ENCODE measurements at regions of chr10 and their contacts with region 1.

Region 1: GRCh38 chr10:127300868-127301321 is 104.5 kb upstream of the INSYN2A start:
- DNase-seq: no peak
- H3K4me3 ChIP-seq: no peak overlapping the region
- H3K4me3 Mint-ChIP-seq: no peak overlapping the region
- H3K27ac Mint-ChIP-seq: no peak overlapping the region
- H3K4me1 ChIP-seq: no peaks in the 10 kb centered on the region
- H3K4me1 Mint-ChIP-seq: no peaks in the 10 kb centered on the region
- H3K27me3 ChIP-seq: no peaks in the 10 kb centered on the region
- H3K27me3 Mint-ChIP-seq: no peaks in the 10 kb centered on the region
- CTCF ChIP-seq: no peak

Region 2: DNA sequence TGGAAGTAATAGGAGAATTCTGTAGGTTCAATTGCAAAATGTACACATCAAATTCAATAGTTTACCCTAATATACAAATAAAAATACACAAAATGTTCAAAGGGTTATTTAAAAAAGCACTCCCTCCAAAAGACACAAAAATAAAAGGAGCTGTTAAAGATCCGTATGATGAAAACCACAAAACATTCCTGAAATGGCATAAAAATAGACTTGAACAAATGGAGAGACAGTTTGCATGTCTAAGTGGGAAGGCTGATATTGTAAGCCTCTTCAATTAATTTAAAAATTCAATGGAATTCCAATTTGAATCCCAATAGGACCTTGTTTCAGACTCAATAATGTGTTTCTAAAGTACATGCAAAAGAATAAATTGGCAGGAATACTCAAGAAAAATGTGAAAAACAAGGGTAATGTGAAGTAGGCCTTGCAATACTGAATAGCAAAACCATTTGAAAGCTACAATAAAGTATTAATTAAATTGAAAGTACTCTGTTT is 66.5 kb before region 1 on chr10:
- CTCF ChIA-PET with region 1: no interaction called
- POLR2A ChIA-PET with region 1: no interaction called
- intact Hi-C with region 1: no loop called
- DNase-seq: no peak
- H3K4me3 ChIP-seq: no peak overlapping the region
- H3K4me3 Mint-ChIP-seq: no peak overlapping the region
- H3K27ac Mint-ChIP-seq: no peak overlapping the region
- H3K4me1 ChIP-seq: no peaks in the 10 kb centered on the region
- H3K4me1 Mint-ChIP-seq: no peaks in the 10 kb centered on the region
- H3K27me3 ChIP-seq: no peaks in the 10 kb centered on the region
- H3K27me3 Mint-ChIP-seq: no peaks in the 10 kb centered on the region
- CTCF ChIP-seq: no peak

Region 3: DNA sequence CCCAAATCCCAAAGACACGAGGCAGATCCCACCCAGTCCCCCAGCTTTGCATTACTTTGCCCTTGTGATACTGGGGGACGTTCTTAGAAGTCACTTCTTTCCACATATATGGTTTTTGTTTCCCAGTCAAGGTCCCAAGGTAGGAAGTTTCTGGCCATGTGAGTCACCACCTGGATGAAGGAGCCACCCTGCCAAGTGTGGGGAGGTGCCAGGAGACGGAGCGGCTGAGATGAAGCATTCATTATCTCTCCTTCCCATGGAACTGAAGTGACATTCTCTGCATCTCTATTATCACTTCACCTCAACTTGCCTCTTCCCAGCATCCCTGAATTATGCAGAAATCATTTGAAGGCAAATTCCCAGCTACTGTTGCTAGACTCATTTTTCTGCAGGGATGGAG is 31.7 kb after region 1 on chr10:
- CTCF ChIA-PET with region 1: no interaction called
- POLR2A ChIA-PET with region 1: no interaction called
- intact Hi-C with region 1: loop called (anchors 2 kb)
- DNase-seq: no peak
- H3K4me3 ChIP-seq: no peak overlapping the region
- H3K4me3 Mint-ChIP-seq: no peak overlapping the region
- H3K27ac Mint-ChIP-seq: no peak overlapping the region
- H3K4me1 ChIP-seq: no peaks in the 10 kb centered on the region
- H3K4me1 Mint-ChIP-seq: no peaks in the 10 kb centered on the region
- H3K27me3 ChIP-seq: no peaks in the 10 kb centered on the region
- H3K27me3 Mint-ChIP-seq: no peaks in the 10 kb centered on the region
- CTCF ChIP-seq: no peak

Measured in Caco-2 (cell line).